CD4-positive, alpha-beta T cell (primary cell): ENCODE measurements at regions of chr2 and their contacts with region 1.

Region 1: DNA sequence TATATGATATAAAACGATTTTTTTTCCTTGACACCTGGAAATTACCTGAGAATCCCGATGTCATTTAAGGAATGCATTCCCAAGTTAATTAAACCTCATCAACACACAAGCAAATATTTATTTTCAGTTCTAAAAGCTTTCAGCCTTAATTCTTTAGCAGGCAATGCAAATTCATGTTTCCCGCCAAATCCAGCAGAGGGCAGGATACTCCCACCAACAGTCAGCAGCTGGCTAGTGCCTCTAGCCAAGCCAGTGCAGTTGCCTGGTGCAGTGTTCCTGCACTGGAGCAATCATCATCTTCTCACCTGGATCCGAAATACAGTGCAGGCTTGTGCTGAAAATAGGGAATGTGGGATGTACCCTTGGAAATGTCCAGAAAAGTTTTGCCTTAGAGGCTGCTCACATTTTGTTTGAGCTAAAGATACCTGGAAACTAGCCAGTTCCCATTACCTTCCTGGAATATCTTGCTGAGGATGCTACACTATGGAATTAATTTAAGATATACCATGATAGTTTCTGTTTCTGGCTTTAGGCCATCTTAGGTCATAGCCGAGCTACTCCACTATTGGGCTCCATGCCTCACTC is 48.4 kb upstream of the CYTIP start:
- DNase-seq: peak; percentile 57 to 86 (median 66)
- ATAC-seq: peak; percentile 92
- H3K4me3 ChIP-seq: no peak overlapping the region
- H3K4me3 Mint-ChIP-seq: no peak overlapping the region
- H3K27ac ChIP-seq: no peak overlapping the region
- H3K27ac Mint-ChIP-seq: no peak overlapping the region
- H3K4me1 ChIP-seq: peaks cover 7% of the 10 kb centered on the region
- H3K4me1 Mint-ChIP-seq: peaks cover 47% of the 10 kb centered on the region
- H3K27me3 ChIP-seq: no peaks in the 10 kb centered on the region
- H3K27me3 Mint-ChIP-seq: no peaks in the 10 kb centered on the region
- CTCF ChIP-seq: peak; percentile 83

Region 2: DNA sequence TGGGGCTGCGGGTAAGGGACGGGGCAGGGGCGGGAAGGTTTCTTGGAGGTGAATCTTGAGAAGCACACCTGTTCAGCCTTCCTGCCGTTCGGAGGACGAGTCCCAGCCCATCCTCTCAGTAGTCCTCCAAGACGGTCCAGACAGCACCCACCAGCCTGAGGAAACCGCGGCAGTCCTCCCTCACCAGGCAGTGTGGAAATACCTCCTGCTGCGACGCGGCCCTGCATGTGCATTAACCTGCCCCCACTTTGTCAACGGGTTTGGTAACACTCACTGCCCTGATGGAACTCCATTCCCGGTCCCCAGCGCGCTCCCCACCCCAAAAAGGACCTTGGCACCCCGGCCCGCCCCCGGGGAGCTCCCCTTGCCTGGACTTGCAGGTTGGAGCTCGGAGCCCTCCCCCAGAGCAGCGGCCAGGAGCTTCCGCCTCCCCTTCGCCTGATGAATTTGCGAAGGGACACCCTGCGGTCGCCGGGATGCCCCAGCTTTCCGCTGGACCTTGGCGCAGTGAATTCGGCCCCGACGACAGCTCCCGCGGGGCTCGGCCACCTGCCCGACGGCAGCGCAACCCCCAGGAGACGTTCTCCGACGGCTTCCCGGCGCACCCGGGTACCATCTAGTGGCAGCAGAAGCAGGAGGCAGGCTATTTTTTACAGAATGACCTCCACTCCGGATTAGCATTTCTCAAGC is 104.9 kb after region 1 on chr2:
- CTCF ChIA-PET with region 1: interaction called, 4 read pairs
- POLR2A ChIA-PET with region 1: no interaction called
- intact Hi-C with region 1: loop called (anchors 2 kb)
- DNase-seq: peak; percentile 31 to 70 (median 50)
- ATAC-seq: peak; percentile 76
- H3K4me3 ChIP-seq: peak overlapping the region; percentile 45
- H3K4me3 Mint-ChIP-seq: peak overlapping the region; percentile 70
- H3K27ac ChIP-seq: no peak overlapping the region
- H3K27ac Mint-ChIP-seq: no peak overlapping the region
- H3K4me1 ChIP-seq: peaks cover 6% of the 10 kb centered on the region
- H3K4me1 Mint-ChIP-seq: peaks cover 16% of the 10 kb centered on the region
- H3K27me3 ChIP-seq: peaks cover 0 to 5% of the 10 kb centered on the region in 2 experiments
- H3K27me3 Mint-ChIP-seq: no peaks in the 10 kb centered on the region
- CTCF ChIP-seq: peak; percentile 68

Region 3: GRCh38 chr2:157751462-157752058 is 259.3 kb after region 1 on chr2:
- CTCF ChIA-PET with region 1: interaction called, 3 read pairs
- POLR2A ChIA-PET with region 1: no interaction called
- intact Hi-C with region 1: loop called in 1 of 2 experiments (anchors 10 kb)
- DNase-seq: peak in 8 of 14 experiments; percentile 6 to 46 (median 14)
- ATAC-seq: no peak
- H3K4me3 ChIP-seq: no peak overlapping the region
- H3K4me3 Mint-ChIP-seq: no peak overlapping the region
- H3K27ac ChIP-seq: no peak overlapping the region
- H3K27ac Mint-ChIP-seq: no peak overlapping the region
- H3K4me1 ChIP-seq: no peaks in the 10 kb centered on the region
- H3K4me1 Mint-ChIP-seq: peaks cover 5% of the 10 kb centered on the region
- H3K27me3 ChIP-seq: no peaks in the 10 kb centered on the region
- H3K27me3 Mint-ChIP-seq: no peaks in the 10 kb centered on the region
- CTCF ChIP-seq: no peak

Region 4: DNA sequence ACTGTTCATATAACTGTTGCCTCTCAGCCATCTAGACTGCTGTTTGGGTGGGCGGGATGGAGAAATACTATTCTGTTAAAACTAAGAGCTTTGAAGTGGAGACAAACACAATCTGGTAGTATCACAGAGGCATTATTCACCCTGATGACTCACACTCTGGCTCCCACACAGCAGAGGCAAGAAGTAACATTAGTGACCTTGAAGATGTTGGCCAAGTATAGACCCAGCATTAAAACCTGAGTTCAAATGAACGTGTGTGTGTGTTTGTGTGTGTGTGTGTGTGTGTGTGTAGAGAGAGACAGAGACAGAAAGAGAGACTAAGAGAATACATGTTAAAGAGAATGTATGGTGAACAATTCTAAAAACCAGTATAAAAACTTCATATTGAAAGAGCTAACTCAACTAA is 406.3 kb after region 1 on chr2:
- CTCF ChIA-PET with region 1: no interaction called
- POLR2A ChIA-PET with region 1: no interaction called
- intact Hi-C with region 1: loop called (anchors 10 kb)
- DNase-seq: peak in 13 of 14 experiments; percentile 33 to 73 (median 47)
- ATAC-seq: peak; percentile 62
- H3K4me3 ChIP-seq: peak overlapping the region; percentile 24
- H3K4me3 Mint-ChIP-seq: peak overlapping the region; percentile 55
- H3K27ac ChIP-seq: peak overlapping the region; percentile 49 to 76
- H3K27ac Mint-ChIP-seq: peak overlapping the region; percentile 85
- H3K4me1 ChIP-seq: peaks cover 63% of the 10 kb centered on the region
- H3K4me1 Mint-ChIP-seq: peaks cover 74% of the 10 kb centered on the region
- H3K27me3 ChIP-seq: no peaks in the 10 kb centered on the region
- H3K27me3 Mint-ChIP-seq: no peaks in the 10 kb centered on the region
- CTCF ChIP-seq: no peak

Region 5: GRCh38 chr2:158753641-158754611 is 1261.6 kb after region 1 on chr2:
- CTCF ChIA-PET with region 1: no interaction called
- POLR2A ChIA-PET with region 1: no interaction called
- intact Hi-C with region 1: loop called in 1 of 2 experiments (anchors 5 kb)
- DNase-seq: peak in 9 of 14 experiments; percentile 4 to 66 (median 12)
- ATAC-seq: peak; percentile 61
- H3K4me3 ChIP-seq: no peak overlapping the region
- H3K4me3 Mint-ChIP-seq: no peak overlapping the region
- H3K27ac ChIP-seq: no peak overlapping the region
- H3K27ac Mint-ChIP-seq: no peak overlapping the region
- H3K4me1 ChIP-seq: no peaks in the 10 kb centered on the region
- H3K4me1 Mint-ChIP-seq: no peaks in the 10 kb centered on the region
- H3K27me3 ChIP-seq: peaks cover 0 to 5% of the 10 kb centered on the region in 2 experiments
- H3K27me3 Mint-ChIP-seq: peaks cover 48% of the 10 kb centered on the region
- CTCF ChIP-seq: peak; percentile 90